ENCODE measurements at regions of chr5 and their contacts with region 1.

Region 1: DNA sequence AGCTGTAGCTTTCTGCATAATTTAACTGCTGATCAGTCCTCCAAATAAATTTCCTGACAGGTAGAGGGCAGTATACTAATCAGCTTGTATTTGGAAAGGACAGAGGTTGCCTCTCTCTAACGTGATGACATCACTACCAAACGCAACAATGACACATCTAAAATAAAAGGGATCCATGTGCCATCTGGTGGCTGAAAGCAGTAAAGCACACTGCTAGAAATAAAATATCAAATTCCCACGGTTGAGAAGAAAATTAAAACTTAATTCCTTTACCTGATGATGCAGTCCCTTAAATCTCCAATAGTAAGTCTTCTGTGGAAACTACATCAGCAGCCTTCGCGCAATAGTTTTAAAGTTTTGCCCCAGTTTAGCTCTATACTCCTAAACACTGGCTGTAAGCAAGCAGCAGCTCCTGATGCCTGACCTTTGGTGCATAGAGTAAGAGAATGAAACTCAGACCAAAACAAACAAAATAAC is 54.5 kb downstream of the DIAPH1 start:
- DNase-seq: peak; percentile 35 to 94
- ATAC-seq: peak; percentile 95 to 99 (median 96)
- H3K4me3 ChIP-seq: no peak overlapping the region
- H3K4me3 Mint-ChIP-seq: no peak overlapping the region
- H3K27ac ChIP-seq: peak overlapping the region; percentile 55
- H3K27ac Mint-ChIP-seq: peak overlapping the region; percentile 86 to 92
- H3K4me1 ChIP-seq: no peaks in the 10 kb centered on the region
- H3K4me1 Mint-ChIP-seq: peaks cover 39 to 52% of the 10 kb centered on the region in 2 donors
- H3K27me3 ChIP-seq: no peaks in the 10 kb centered on the region
- H3K27me3 Mint-ChIP-seq: no peaks in the 10 kb centered on the region
- CTCF ChIP-seq: peak; percentile 87

Region 2: DNA sequence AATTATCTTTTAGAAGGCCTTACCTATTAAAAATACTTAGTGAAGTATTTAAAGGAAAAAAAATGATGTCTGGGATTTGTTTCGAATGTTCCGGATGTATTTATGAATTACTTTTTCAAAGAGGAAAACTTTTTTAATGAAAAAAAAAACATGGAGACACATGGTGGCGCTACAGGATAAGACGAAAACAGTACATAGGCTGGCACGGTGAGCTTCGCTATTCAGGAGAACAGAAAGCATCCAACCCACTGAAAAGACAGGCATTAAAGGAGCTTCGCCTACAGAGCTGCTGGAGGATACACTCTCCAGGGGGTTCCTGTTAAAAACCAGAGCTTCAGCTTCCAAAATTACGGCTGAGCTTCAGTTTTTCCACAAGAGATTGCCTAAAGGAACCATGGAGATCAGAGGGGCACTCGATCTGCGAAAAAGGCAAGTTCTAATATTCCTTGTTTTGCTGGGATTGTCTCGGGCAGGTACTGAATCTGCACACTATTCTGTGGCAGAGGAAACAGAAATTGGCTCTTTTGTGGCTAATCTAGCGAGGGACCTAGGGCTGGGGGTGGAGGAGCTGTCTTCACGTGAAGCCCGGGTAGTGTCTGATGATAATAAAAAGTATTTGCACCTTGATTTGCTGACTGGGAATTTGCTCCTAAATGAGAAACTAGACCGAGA is 341.0 kb before region 1 on chr5 and contains the start of gene PCDHB14:
- intact Hi-C with region 1: loop called (anchors 10 kb)
- DNase-seq: peak in 1 of 2 donors; percentile 44
- ATAC-seq: no peak
- H3K4me3 ChIP-seq: no peak within 1 kb of the TSS
- H3K4me3 Mint-ChIP-seq: no peak within 1 kb of the TSS
- H3K27ac ChIP-seq: no peak within 1 kb of the TSS
- H3K27ac Mint-ChIP-seq: no peak within 1 kb of the TSS
- H3K4me1 ChIP-seq: no peaks in the 10 kb centered on the region
- H3K4me1 Mint-ChIP-seq: no peaks in the 10 kb centered on the region
- H3K27me3 ChIP-seq: peaks cover 2% of the 10 kb centered on the region
- H3K27me3 Mint-ChIP-seq: peaks cover 0 to 12% of the 10 kb centered on the region in 2 donors
- CTCF ChIP-seq: no peak
- total RNA-seq, gene PCDHB14: not detected

Region 3: GRCh38 chr5:141320225-141321169 is 243.8 kb before region 1 on chr5 and contains the start of gene TAF7:
- intact Hi-C with region 1: loop called (anchors 1 kb)
- DNase-seq: peak; percentile 93 to 97
- ATAC-seq: peak; percentile 89 to 96 (median 90)
- H3K4me3 ChIP-seq: peak within 1 kb of the TSS; percentile 93
- H3K4me3 Mint-ChIP-seq: peak within 1 kb of the TSS; percentile 99
- H3K27ac ChIP-seq: peak within 1 kb of the TSS; percentile 97
- H3K27ac Mint-ChIP-seq: peak within 1 kb of the TSS; percentile 100
- H3K4me1 ChIP-seq: peaks cover 12% of the 10 kb centered on the region
- H3K4me1 Mint-ChIP-seq: peaks cover 31 to 34% of the 10 kb centered on the region in 2 donors
- H3K27me3 ChIP-seq: no peaks in the 10 kb centered on the region
- H3K27me3 Mint-ChIP-seq: peaks cover 3 to 7% of the 10 kb centered on the region in 2 donors
- CTCF ChIP-seq: peak; percentile 81
- total RNA-seq, gene TAF7: 77.3 to 96.1 (median 89.4) TPM

Region 4: DNA sequence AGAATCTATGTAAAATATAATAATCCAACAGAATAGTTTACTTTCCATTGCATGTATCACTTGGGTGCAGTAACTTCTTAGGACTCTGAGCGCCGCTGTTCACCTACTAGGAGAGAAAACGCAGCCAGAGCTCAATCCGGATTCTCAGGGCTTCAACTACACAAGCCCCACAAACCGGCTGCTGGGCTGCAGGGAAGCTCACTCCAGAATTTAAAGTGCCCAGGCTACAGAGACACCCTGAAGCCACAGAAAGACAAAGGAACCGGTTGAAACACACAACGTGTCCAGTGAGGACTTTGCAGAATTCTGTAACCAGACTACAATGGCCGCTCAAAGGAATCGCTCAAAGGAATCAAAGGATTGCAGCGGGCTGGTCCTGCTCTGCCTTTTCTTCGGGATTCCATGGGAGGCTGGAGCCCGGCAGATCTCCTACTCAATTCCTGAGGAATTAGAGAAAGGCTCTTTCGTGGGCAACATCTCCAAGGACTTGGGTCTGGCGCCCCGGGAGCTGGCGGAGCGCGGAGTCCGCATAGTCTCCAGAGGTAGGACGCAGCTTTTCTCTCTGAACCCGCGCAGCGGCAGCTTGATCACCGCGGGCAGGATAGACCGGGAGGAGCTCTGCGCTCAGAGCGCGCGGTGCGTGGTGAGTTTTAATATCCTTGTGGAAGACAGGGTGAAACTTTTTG is 151.3 kb before region 1 on chr5 and contains the start of gene PCDHGA10:
- intact Hi-C with region 1: loop called (anchors 2 kb)
- DNase-seq: peak in 1 of 2 donors; percentile 73
- ATAC-seq: peak; percentile 63 to 67 (median 65)
- H3K4me3 ChIP-seq: peak within 1 kb of the TSS; percentile 22
- H3K4me3 Mint-ChIP-seq: peak within 1 kb of the TSS; percentile 93
- H3K27ac ChIP-seq: peak within 1 kb of the TSS; percentile 22
- H3K27ac Mint-ChIP-seq: peak within 1 kb of the TSS; percentile 61 to 82
- H3K4me1 ChIP-seq: peaks cover 27% of the 10 kb centered on the region
- H3K4me1 Mint-ChIP-seq: peaks cover 35 to 54% of the 10 kb centered on the region in 2 donors
- H3K27me3 ChIP-seq: peaks cover 68% of the 10 kb centered on the region
- H3K27me3 Mint-ChIP-seq: peaks cover 52 to 60% of the 10 kb centered on the region in 2 donors
- CTCF ChIP-seq: peak; percentile 63
- total RNA-seq, gene PCDHGA10: 0.61 to 2.6 (median 2.1) TPM

Region 5: GRCh38 chr5:141603923-141604717 is 39.9 kb after region 1 on chr5:
- intact Hi-C with region 1: no loop called
- DNase-seq: peak in 1 of 2 donors; percentile 58
- ATAC-seq: peak in 2 of 3 donors; percentile 18 to 48
- H3K4me3 ChIP-seq: no peak overlapping the region
- H3K4me3 Mint-ChIP-seq: peak overlapping the region; percentile 89
- H3K27ac ChIP-seq: peak overlapping the region; percentile 90
- H3K27ac Mint-ChIP-seq: peak overlapping the region; percentile 95 to 96
- H3K4me1 ChIP-seq: peaks cover 55% of the 10 kb centered on the region
- H3K4me1 Mint-ChIP-seq: peaks cover 85 to 88% of the 10 kb centered on the region in 2 donors
- H3K27me3 ChIP-seq: no peaks in the 10 kb centered on the region
- H3K27me3 Mint-ChIP-seq: no peaks in the 10 kb centered on the region
- CTCF ChIP-seq: no peak

Region 6: GRCh38 chr5:141618804-141619554 is 54.7 kb after region 1 on chr5 and contains the start of gene DIAPH1:
- intact Hi-C with region 1: loop called (anchors 1 kb)
- DNase-seq: peak; percentile 96 to 98
- ATAC-seq: peak; percentile 93 to 99 (median 95)
- H3K4me3 ChIP-seq: peak within 1 kb of the TSS; percentile 98
- H3K4me3 Mint-ChIP-seq: peak within 1 kb of the TSS; percentile 100
- H3K27ac ChIP-seq: peak within 1 kb of the TSS; percentile 95
- H3K27ac Mint-ChIP-seq: peak within 1 kb of the TSS; percentile 93 to 96
- H3K4me1 ChIP-seq: peaks cover 26% of the 10 kb centered on the region
- H3K4me1 Mint-ChIP-seq: peaks cover 37 to 38% of the 10 kb centered on the region in 2 donors
- H3K27me3 ChIP-seq: no peaks in the 10 kb centered on the region
- H3K27me3 Mint-ChIP-seq: no peaks in the 10 kb centered on the region
- CTCF ChIP-seq: peak; percentile 94
- total RNA-seq, gene DIAPH1: 410 to 456 (median 419) TPM